A549 (cell line): ENCODE measurements at regions of chr14 and their contacts with region 1.

Region 1: DNA sequence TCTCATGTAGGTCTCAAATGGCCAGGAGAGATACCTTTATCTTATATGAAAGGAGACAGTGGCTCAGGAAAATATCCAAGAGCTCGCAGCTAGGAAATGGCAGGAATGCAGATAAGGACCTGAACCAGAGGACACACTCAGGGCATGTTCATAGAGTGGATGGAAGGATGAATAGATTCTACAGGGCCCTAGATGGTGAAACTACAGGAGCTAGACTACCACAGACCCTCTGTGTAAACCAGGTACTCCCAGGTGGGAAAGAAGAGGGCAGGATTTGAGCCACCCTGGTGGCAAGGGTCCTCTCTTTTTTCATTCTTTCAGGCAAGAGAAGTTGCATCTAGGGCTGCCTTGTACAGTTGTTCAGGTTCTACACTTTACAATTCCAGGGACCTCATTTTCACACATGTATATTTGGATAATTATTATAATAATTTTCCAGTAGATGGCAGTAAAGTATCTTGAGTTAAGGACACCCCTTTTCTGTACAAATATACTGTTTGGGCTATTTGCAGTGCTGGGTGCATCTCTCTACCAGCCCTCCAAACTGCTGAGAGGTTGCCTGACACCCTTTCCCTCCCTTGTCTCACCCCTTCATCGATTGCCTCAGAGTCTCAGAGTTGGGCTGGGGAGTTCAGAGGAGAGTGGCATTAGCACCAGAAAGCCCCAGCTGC is 10.5 kb upstream of the ZDHHC22 start:
- DNase-seq: peak; percentile 42 to 83
- ATAC-seq: peak; percentile 84 to 91; a peak in 5 of 6 replicates
- H3K4me3 ChIP-seq: no peak overlapping the region
- H3K27ac ChIP-seq: no peak overlapping the region
- H3K4me1 ChIP-seq: no peaks in the 10 kb centered on the region
- CTCF ChIP-seq: peak; percentile 68
- EP300 ChIP-seq: no peak
- POLR2A ChIP-seq: no peak
- RAD21 ChIP-seq: peak; percentile 74 to 75

Region 2: GRCh38 chr14:77124345-77125280 is 27.4 kb before region 1 on chr14:
- CTCF ChIA-PET with region 1: interaction called, 13 read pairs
- POLR2A ChIA-PET with region 1: no interaction called
- DNase-seq: peak in 1 of 2 experiments; percentile 48
- ATAC-seq: peak; percentile 76 to 90
- H3K4me3 ChIP-seq: peak overlapping the region; percentile 47
- H3K27ac ChIP-seq: peak overlapping the region; percentile 62 to 84
- H3K4me1 ChIP-seq: peaks cover 15% of the 10 kb centered on the region; the same call in 2 of the 3 replicates
- CTCF ChIP-seq: peak; percentile 92
- EP300 ChIP-seq: no peak
- POLR2A ChIP-seq: peak; percentile 60
- RAD21 ChIP-seq: peak in 1 of 2 experiments; percentile 51; a peak in 2 of 5 replicates

Region 3: GRCh38 chr14:77139540-77140358 is 12.3 kb before region 1 on chr14:
- CTCF ChIA-PET with region 1: interaction called, 78 read pairs
- POLR2A ChIA-PET with region 1: no interaction called
- DNase-seq: peak; percentile 59 to 89
- ATAC-seq: peak; percentile 67 to 87
- H3K4me3 ChIP-seq: peak overlapping the region; percentile 58
- H3K27ac ChIP-seq: peak overlapping the region in 1 of 2 experiments; percentile 43; a peak in 1 of 6 replicates
- H3K4me1 ChIP-seq: peaks cover 9% of the 10 kb centered on the region
- CTCF ChIP-seq: peak; percentile 70
- EP300 ChIP-seq: no peak
- POLR2A ChIP-seq: no peak
- RAD21 ChIP-seq: peak; percentile 55 to 59

Region 4: DNA sequence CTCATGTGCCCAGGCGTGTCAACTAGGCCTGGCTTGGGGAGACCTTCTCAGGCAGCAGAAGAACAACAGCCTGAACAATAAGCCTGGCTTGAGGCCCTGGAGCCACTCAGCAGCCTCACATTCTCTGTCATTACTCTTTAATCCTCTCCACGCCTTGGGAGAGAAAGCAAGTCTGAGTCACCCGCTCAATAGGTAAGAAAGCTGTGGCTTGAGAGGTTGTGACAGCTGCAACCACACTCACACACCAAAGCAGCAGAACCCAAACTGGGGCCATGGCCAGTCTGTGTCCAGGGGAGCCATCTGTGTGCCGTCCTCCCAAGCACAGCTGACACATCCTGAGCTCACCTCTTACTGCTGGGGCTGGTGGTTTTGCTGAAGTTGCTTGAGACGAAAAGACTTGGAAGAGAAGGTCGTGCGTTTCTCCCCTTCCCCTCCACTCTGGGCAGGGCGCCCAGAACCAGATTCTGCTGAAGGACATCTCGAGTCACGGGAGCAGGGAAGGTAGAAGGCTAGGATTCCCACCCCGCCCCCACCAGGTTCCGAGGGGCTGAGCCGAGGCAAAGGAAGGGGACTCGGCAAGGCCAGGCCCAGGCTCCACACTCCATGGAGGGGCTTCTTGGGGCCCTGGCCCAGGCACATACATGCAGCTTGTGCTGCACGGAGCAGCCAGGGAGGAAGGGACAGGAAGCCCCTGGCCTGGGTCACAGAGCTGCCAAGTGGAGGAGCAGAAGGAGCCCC is 35.0 kb after region 1 on chr14:
- CTCF ChIA-PET with region 1: interaction called, 25 read pairs
- POLR2A ChIA-PET with region 1: no interaction called
- DNase-seq: peak in 1 of 2 experiments; percentile 25
- ATAC-seq: peak; percentile 8 to 10; a peak in 2 of 6 replicates
- H3K4me3 ChIP-seq: no peak overlapping the region
- H3K27ac ChIP-seq: no peak overlapping the region; a peak in 1 of 6 replicates
- H3K4me1 ChIP-seq: peaks cover 4% of the 10 kb centered on the region; the same call in 1 of the 3 replicates
- CTCF ChIP-seq: no peak
- EP300 ChIP-seq: no peak
- POLR2A ChIP-seq: no peak
- RAD21 ChIP-seq: no peak

Region 5: DNA sequence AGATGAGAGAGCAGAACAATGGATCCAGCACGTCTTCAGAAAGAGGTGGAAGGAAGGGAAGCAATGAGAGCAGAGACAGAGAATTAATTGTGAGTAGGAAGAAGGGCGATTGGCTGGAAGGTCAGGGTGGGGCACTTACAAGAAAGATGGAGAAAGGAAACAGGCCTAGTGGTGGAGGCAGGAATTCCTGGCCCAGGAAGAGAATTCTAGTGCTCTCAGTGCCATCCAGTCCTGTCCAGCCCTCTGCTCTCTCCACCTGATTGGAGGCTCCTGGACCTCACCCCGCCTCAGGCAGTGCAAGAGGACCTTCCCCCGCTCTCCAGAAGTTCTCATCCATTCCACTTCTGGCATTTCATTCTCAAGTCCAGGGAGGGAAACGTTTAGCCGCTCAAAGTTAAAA is 76.0 kb after region 1 on chr14:
- CTCF ChIA-PET with region 1: interaction called, 15 read pairs
- POLR2A ChIA-PET with region 1: no interaction called
- DNase-seq: no peak
- ATAC-seq: peak; percentile 65 to 80; a peak in 3 of 6 replicates
- H3K4me3 ChIP-seq: no peak overlapping the region
- H3K27ac ChIP-seq: no peak overlapping the region
- H3K4me1 ChIP-seq: no peaks in the 10 kb centered on the region
- CTCF ChIP-seq: no peak
- EP300 ChIP-seq: no peak
- POLR2A ChIP-seq: no peak
- RAD21 ChIP-seq: no peak

Region 6: DNA sequence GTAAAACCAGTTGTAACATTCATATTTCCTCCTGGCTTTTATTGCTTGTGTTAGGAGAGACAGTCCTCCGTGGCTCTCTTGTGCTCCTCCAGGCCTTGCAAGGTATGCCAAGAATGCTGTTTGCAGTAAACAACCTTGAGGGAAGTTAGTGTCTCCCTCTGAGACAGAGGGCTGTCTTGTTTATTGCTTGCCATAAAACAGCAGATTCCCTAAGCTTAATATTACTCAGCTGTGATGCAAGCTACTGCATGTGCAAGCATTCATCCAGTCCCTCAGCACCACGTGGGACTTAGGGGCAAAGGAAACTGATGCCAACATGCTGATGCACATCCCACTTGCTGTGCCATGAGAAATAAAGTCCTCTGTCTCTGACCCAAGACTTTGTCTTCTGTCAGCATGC is 162.0 kb after region 1 on chr14:
- CTCF ChIA-PET with region 1: interaction called, 116 read pairs
- POLR2A ChIA-PET with region 1: interaction called, 3 read pairs
- DNase-seq: peak in 1 of 2 experiments; percentile 84
- ATAC-seq: peak; percentile 82 to 85
- H3K4me3 ChIP-seq: no peak overlapping the region
- H3K27ac ChIP-seq: peak overlapping the region; percentile 73 to 76
- H3K4me1 ChIP-seq: peaks cover 56% of the 10 kb centered on the region
- CTCF ChIP-seq: no peak
- EP300 ChIP-seq: no peak; a peak in 1 of 5 replicates
- POLR2A ChIP-seq: no peak
- RAD21 ChIP-seq: no peak

Region 7: GRCh38 chr14:77554207-77554606 is 402.2 kb after region 1 on chr14:
- CTCF ChIA-PET with region 1: interaction called, 39 read pairs
- POLR2A ChIA-PET with region 1: no interaction called
- DNase-seq: no peak
- ATAC-seq: no peak
- H3K4me3 ChIP-seq: no peak overlapping the region
- H3K27ac ChIP-seq: no peak overlapping the region
- H3K4me1 ChIP-seq: no peaks in the 10 kb centered on the region
- CTCF ChIP-seq: no peak
- EP300 ChIP-seq: no peak
- POLR2A ChIP-seq: no peak
- RAD21 ChIP-seq: no peak